ENCODE measurements at regions of chr7 and their contacts with region 1.

Region 1: DNA sequence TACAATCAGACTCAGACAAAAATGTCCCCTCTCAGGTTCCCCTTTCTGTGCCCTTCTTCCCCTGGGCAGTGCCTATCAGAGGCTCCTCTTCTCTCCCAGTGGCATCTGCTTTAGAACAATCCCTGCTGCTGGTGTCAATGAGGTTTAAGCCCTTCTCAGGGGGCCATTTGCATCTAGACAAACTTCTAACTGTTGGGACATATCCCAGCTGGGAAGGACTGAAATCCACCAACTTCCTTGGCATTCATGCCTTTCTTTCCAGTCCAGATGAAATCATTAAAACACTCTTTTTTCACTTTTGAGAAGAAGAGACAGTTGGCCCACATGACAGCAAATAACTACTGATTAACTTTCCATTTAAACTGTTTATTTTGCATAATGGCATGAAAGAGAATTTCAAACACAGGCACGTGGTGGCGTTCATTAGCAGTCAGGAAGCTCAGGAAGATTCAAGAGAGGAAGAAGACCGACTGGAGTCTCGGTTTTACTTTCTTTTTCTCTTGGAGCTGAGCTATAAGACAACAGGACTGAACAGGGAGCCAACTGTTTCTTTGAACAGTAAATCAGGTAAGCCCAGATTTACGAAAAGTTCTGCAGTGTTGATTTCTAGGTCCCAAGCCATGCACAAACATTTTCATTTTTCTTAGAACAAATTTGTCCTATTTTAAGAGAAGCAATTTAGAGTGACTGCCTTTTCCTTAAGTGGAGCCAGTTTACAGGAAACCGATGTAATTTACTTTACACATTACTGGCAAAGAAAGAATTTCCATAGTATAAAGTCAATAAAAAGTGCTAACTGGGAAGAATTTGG is at the start of gene GIMAP2:
- DNase-seq: peak; percentile 41
- ATAC-seq: peak; percentile 85
- H3K4me3 Mint-ChIP-seq: peak within 1 kb of the TSS; percentile 96
- H3K27ac Mint-ChIP-seq: peak within 1 kb of the TSS; percentile 100
- H3K4me1 Mint-ChIP-seq: peaks cover 75% of the 10 kb centered on the region
- H3K27me3 Mint-ChIP-seq: no peaks in the 10 kb centered on the region
- total RNA-seq, gene GIMAP2: 30.0 to 40.1 TPM

Region 2: GRCh38 chr7:150620617-150621371 is 64.6 kb before region 1 on chr7:
- CTCF ChIA-PET with region 1: interaction called, 3 read pairs
- POLR2A ChIA-PET with region 1: no interaction called
- intact Hi-C with region 1: loop called in 1 of 2 experiments (anchors 5 kb)
- DNase-seq: no peak
- ATAC-seq: peak; percentile 75
- H3K4me3 Mint-ChIP-seq: no peak overlapping the region
- H3K27ac Mint-ChIP-seq: peak overlapping the region; percentile 79
- H3K4me1 Mint-ChIP-seq: peaks cover 53% of the 10 kb centered on the region
- H3K27me3 Mint-ChIP-seq: no peaks in the 10 kb centered on the region

Measured in activated CD4-positive, alpha-beta T cell treated with anti-CD3 and anti-CD28 coated beads for 36 hours (primary cell).